ENCODE measurements at regions of chr1 and their contacts with region 1.

Region 1: DNA sequence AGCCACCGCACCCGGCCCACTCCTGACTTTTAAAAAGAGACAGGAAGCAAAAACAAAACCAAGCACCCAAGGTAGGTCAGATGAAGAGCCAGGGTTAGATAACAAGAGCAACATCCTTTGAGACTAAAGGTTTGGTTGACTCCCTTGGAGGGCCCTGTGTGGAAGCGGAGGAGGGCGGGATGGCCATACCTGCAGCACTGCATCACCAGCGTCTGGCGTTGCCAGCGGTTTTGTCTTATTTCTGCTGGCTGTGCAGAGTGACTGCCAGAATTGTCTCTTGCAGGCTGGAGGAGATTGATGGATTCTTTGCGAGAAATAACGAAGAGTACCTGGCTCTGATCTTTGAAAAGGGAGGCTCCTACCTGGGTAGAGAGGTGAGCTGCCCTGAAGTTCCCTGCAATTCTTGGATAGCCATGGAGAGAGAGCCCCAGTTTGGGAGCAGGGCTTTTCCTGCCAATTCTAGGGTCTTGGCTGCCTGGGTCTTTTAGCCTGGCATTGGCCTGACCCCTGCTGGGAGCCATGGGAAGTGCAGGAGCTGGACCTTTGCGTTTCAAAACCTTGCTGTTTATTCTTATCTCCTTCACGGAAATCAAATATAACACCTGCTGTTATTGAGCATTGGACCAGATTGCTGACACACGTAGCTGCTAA is 24.0 kb downstream of the QSOX1 start:
- DNase-seq: peak; percentile 79
- H3K4me3 Mint-ChIP-seq: no peak overlapping the region
- H3K27ac Mint-ChIP-seq: no peak overlapping the region
- H3K4me1 Mint-ChIP-seq: no peaks in the 10 kb centered on the region
- H3K27me3 Mint-ChIP-seq: no peaks in the 10 kb centered on the region

Region 2: GRCh38 chr1:179867807-179868330 is 310.8 kb before region 1 on chr1:
- CTCF ChIA-PET with region 1: interaction called, 33 read pairs
- intact Hi-C with region 1: loop called (anchors 1 kb)
- DNase-seq: peak; percentile 71
- H3K4me3 Mint-ChIP-seq: no peak overlapping the region
- H3K27ac Mint-ChIP-seq: no peak overlapping the region
- H3K4me1 Mint-ChIP-seq: peaks cover 13% of the 10 kb centered on the region
- H3K27me3 Mint-ChIP-seq: no peaks in the 10 kb centered on the region

Region 3: DNA sequence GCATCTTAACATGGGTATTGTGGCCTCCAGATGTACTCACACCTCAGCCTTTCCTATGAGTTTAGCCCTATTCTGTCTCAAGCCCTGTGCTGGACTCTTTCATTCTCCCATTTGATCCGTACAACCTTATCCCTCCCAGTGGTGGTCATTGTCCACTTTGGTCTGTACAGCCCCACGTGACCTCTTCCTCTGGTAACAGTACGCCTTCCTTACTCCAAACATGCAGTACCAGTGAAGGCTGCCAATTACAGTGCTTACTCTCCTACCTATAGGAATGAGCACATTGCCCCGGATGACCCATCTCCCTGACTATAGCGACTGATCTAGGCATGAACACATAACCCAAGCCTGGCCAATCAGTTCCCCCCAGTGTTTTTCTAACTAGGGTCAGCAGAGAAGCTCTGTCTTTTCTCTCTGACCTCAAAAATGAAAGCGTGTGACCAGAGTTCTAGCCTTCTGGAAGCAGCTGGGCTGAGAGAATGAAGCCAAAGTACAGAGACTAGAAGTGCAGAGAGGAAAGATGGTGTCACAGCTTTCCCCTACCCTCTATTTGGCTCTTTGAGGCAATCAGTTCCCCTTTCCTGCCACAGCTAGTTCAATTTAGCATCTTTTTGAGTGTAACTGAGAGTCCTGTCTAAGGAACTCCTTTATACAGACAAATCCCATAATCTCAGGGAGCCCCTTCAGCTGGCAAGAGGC is 33.8 kb before region 1 on chr1:
- CTCF ChIA-PET with region 1: interaction called, 14 read pairs
- intact Hi-C with region 1: no loop called
- DNase-seq: no peak
- H3K4me3 Mint-ChIP-seq: no peak overlapping the region
- H3K27ac Mint-ChIP-seq: no peak overlapping the region
- H3K4me1 Mint-ChIP-seq: no peaks in the 10 kb centered on the region
- H3K27me3 Mint-ChIP-seq: no peaks in the 10 kb centered on the region

Region 4: DNA sequence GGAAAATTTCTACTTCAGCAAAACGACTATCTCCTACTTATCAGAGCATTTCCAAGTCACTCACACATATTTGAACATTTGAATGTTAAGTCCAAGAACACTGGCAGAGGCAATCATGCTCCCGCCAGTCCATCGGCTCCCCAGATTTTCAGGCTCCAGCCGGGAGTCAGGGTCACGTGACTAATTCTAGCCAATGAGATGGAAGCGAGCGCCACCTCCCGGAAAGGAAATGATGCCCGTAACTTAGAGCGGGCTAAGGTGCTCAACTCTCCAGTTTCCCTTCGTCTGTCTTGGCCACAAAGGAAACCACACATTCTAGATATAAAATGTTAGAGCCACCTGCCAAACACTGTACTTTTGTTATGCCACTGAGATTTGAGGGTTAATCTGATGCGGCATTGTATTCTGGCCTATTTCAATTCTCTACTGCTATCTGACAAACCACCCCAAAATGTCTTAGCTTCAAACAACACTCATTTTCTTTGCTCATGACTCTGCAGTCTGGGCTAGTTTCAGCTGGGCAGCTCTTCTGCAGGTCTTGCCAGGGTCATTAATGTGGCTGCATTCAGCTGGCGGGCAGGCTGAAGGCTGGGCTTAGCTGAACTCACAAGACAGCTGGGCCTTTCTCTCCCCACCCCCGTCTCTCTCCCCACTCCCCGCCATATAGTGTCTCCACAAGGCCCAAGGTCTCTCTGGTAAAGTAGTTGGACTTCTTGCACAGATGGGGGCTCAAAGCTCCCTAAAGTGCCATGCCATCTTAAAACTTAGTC is 35.0 kb after region 1 on chr1:
- CTCF ChIA-PET with region 1: interaction called, 3 read pairs
- intact Hi-C with region 1: loop called (anchors 2 kb)
- DNase-seq: peak; percentile 80
- H3K4me3 Mint-ChIP-seq: peak overlapping the region; percentile 56
- H3K27ac Mint-ChIP-seq: no peak overlapping the region
- H3K4me1 Mint-ChIP-seq: peaks cover 20% of the 10 kb centered on the region
- H3K27me3 Mint-ChIP-seq: peaks cover 4% of the 10 kb centered on the region

Region 5: GRCh38 chr1:180482425-180483275 is 304.0 kb after region 1 on chr1:
- CTCF ChIA-PET with region 1: interaction called, 7 read pairs
- intact Hi-C with region 1: loop called (anchors 1 kb)
- DNase-seq: no peak
- H3K4me3 Mint-ChIP-seq: no peak overlapping the region
- H3K27ac Mint-ChIP-seq: no peak overlapping the region
- H3K4me1 Mint-ChIP-seq: peaks cover 11% of the 10 kb centered on the region
- H3K27me3 Mint-ChIP-seq: no peaks in the 10 kb centered on the region

Measured in activated naive CD4-positive, alpha-beta T cell treated with anti-CD3 and anti-CD28 coated beads for 36 hours (primary cell).